CD4-positive, alpha-beta memory T cell (primary cell): ENCODE measurements at regions of chr10 and their contacts with region 1.

Region 1: GRCh38 chr10:124719213-124719851 is 24.8 kb downstream of the FAM53B start:
- DNase-seq: peak; percentile 81 to 89 (median 84)
- H3K4me3 ChIP-seq: peak overlapping the region in 1 of 2 donors; percentile 19
- H3K4me3 Mint-ChIP-seq: peak overlapping the region; percentile 59 to 83 (median 72)
- H3K27ac ChIP-seq: peak overlapping the region; percentile 81
- H3K27ac Mint-ChIP-seq: peak overlapping the region; percentile 87 to 98 (median 96)
- H3K4me1 ChIP-seq: peaks cover 100% of the 10 kb centered on the region
- H3K4me1 Mint-ChIP-seq: peaks cover 79 to 97% (median 89%) of the 10 kb centered on the region in 4 donors
- H3K27me3 ChIP-seq: no peaks in the 10 kb centered on the region
- H3K27me3 Mint-ChIP-seq: no peaks in the 10 kb centered on the region

Region 2: DNA sequence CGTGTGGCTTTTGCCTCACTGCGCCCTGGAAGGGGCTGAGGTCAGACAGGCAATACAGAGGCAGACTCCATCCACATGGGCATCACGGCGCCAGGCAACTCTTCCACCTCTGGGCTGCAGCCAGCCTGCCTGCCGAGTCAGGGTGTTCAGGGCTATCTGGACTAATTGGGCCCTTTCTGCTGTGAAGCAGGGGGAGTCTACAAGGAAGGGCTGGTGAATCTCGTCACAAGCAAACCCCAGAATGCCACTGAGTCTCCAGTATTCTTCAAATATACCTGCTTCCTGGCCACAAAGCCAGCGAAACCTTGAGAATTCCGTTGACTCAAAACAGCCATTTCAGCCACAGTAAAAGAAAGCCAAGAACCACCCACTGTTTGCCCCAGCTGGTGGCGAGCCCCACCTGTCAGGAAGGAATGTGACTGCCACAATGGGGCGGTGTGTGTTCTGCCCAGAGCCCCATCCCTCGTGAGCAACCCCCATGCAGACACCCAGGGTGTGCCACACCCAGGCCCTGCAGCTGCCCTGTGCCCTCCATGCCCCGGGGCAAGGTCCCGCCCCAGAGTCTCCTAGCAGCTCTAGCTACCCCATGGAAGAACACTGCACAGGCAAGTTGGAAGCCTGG is 92.5 kb before region 1 on chr10:
- CTCF ChIA-PET with region 1: interaction called, 50 read pairs
- POLR2A ChIA-PET with region 1: interaction called, 27 read pairs
- intact Hi-C with region 1: loop called (anchors 1 kb)
- DNase-seq: peak; percentile 46 to 60 (median 55)
- H3K4me3 ChIP-seq: peak overlapping the region; percentile 11 to 14
- H3K4me3 Mint-ChIP-seq: peak overlapping the region in 7 of 8 donors; percentile 36 to 76 (median 69)
- H3K27ac ChIP-seq: peak overlapping the region; percentile 49
- H3K27ac Mint-ChIP-seq: peak overlapping the region; percentile 82 to 96 (median 89)
- H3K4me1 ChIP-seq: peaks cover 68% of the 10 kb centered on the region
- H3K4me1 Mint-ChIP-seq: peaks cover 34 to 81% (median 50%) of the 10 kb centered on the region in 4 donors
- H3K27me3 ChIP-seq: no peaks in the 10 kb centered on the region
- H3K27me3 Mint-ChIP-seq: no peaks in the 10 kb centered on the region

Region 3: DNA sequence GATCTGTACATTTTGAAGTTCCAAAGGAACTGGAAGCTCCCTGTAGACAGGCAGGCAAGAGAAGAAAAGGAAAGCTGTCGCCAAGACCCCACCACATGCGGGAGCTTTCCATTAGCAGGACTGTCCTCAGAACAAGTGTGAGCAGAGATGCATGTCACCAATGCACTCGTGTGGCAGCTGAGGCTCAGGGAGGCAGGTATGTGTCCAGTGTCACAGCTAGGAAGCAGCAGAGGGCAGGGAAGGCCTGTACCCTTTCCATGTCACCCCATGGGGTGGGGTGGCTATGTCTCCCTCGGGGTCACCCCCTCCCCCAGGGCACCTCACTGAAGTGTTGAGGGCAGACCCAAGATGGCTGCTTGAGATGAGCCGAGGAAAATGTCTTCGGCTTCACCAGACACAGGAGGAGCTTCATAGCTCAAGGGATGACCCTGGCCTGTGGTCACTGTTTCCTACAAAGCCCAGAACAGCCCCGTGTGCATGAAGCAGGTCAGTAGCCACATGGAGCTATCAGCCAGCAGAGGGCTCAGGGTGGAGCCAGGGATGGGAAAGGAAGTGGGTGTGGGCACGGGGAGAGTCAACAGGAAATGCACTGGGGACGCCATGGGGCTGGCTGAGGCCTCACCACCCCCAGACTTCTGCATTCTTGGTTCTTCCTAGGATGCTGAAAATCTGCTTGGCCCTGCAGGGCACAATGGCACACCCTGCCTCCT is 71.8 kb before region 1 on chr10:
- CTCF ChIA-PET with region 1: interaction called, 200 read pairs
- POLR2A ChIA-PET with region 1: interaction called, 297 read pairs
- intact Hi-C with region 1: loop called (anchors 1 kb)
- DNase-seq: peak; percentile 75 to 85 (median 78)
- H3K4me3 ChIP-seq: peak overlapping the region; percentile 26 to 34
- H3K4me3 Mint-ChIP-seq: peak overlapping the region; percentile 41 to 88 (median 80)
- H3K27ac ChIP-seq: peak overlapping the region; percentile 79
- H3K27ac Mint-ChIP-seq: peak overlapping the region; percentile 92 to 99 (median 96)
- H3K4me1 ChIP-seq: peaks cover 95% of the 10 kb centered on the region
- H3K4me1 Mint-ChIP-seq: peaks cover 69 to 100% (median 90%) of the 10 kb centered on the region in 4 donors
- H3K27me3 ChIP-seq: no peaks in the 10 kb centered on the region
- H3K27me3 Mint-ChIP-seq: no peaks in the 10 kb centered on the region

Region 4: DNA sequence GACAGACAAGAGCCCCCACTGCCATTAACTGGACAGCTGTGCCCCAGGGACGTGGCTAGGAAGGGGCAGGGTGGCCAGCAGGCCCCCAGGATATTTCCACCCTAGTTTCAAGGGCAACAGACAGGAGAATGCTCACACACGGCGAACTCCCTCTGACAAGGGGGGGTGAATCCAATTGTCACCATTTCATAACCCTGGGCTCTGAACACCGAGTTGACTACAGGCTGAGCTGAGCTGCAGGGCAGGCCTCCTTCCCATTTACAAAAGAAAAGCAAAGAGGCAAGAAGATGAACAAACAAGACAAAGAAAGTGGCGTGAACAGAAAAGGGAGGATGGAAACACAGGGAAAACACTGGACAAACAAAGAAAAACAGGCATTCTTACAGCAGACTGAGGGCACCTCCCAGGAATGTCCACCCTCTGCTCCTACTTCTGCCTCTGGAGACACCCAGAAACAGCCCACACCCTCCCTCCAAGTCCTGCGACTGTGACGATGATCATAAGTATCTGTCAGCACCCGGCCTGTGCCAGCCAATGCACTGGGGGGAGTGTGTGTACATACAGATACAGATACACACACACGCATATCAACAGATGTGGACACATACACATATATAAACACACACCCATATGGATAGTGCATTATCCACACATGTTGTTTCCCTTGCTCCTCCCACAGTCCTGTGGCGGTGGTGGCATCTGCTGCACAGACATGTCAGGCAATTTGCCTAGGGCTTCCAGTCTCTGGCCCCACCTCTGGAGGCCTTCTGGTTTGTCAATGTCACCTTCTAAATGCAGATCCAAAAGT is 41.4 kb before region 1 on chr10:
- CTCF ChIA-PET with region 1: interaction called, 120 read pairs
- POLR2A ChIA-PET with region 1: interaction called, 79 read pairs
- intact Hi-C with region 1: loop called (anchors 1 kb)
- DNase-seq: no peak
- H3K4me3 ChIP-seq: peak overlapping the region; percentile 36 to 56
- H3K4me3 Mint-ChIP-seq: peak overlapping the region; percentile 76 to 88 (median 79)
- H3K27ac ChIP-seq: peak overlapping the region; percentile 54
- H3K27ac Mint-ChIP-seq: peak overlapping the region; percentile 85 to 97 (median 92)
- H3K4me1 ChIP-seq: peaks cover 96% of the 10 kb centered on the region
- H3K4me1 Mint-ChIP-seq: peaks cover 70 to 99% (median 89%) of the 10 kb centered on the region in 4 donors
- H3K27me3 ChIP-seq: no peaks in the 10 kb centered on the region
- H3K27me3 Mint-ChIP-seq: no peaks in the 10 kb centered on the region

Region 5: DNA sequence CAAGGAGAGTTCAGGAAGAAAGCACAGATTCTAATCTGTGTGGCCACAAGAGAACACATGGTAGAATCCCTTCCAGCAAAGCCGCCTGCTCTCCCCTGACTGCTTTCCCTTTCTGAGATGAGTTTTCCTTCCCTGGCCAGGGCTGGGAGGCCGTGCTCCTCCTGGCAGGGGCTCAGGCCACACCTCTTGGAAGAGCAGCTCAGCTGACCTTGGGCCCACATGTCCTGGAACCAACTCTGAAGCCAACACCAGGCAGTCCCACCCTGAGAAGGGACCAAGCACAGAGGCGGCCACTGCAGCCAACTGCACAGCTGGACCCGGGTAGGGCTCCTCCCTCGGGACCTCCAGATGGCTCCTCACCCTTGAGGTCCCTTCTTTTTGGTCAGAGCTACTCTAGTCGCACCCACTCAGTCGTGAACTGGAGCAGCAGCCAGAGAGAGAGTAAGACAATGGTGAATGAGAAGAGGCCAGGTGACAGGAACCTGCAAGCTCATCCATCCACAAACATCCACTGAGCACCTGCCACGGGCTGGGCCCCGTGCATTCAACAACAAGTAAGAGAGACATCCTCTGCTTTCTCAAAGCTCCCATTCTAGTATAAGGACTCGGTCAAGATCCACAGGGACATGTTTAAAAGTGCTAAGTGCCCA is 15.4 kb before region 1 on chr10:
- CTCF ChIA-PET with region 1: interaction called, 201 read pairs
- POLR2A ChIA-PET with region 1: interaction called, 544 read pairs
- intact Hi-C with region 1: loop called (anchors 1 kb)
- DNase-seq: peak in 1 of 5 donors; percentile 15
- H3K4me3 ChIP-seq: no peak overlapping the region
- H3K4me3 Mint-ChIP-seq: peak overlapping the region in 7 of 8 donors; percentile 23 to 90 (median 58)
- H3K27ac ChIP-seq: peak overlapping the region; percentile 90
- H3K27ac Mint-ChIP-seq: peak overlapping the region; percentile 95 to 99 (median 97)
- H3K4me1 ChIP-seq: peaks cover 100% of the 10 kb centered on the region
- H3K4me1 Mint-ChIP-seq: peaks cover 72 to 100% (median 93%) of the 10 kb centered on the region in 4 donors
- H3K27me3 ChIP-seq: no peaks in the 10 kb centered on the region
- H3K27me3 Mint-ChIP-seq: no peaks in the 10 kb centered on the region

Region 6: DNA sequence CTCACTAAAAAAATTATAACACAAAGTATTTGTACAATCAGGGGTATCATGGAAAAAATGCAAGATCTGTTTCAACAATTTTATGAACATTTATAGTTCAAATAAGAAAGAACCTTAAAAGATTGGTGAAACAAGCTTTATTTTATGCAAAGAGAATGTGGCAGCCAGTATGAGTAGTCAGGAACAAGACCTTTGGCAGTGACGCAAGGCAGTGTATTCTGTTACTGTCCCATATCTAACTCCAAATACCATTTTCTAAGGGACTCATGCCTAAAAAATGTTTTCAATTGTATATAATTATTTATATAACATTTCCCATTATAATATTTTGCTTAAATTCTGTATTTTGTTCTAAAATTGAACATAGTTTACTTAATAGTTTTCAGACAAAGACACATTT is 43.9 kb after region 1 on chr10:
- CTCF ChIA-PET with region 1: no interaction called
- POLR2A ChIA-PET with region 1: no interaction called
- intact Hi-C with region 1: no loop called
- DNase-seq: no peak
- H3K4me3 ChIP-seq: no peak overlapping the region
- H3K4me3 Mint-ChIP-seq: no peak overlapping the region
- H3K27ac ChIP-seq: no peak overlapping the region
- H3K27ac Mint-ChIP-seq: no peak overlapping the region
- H3K4me1 ChIP-seq: no peaks in the 10 kb centered on the region
- H3K4me1 Mint-ChIP-seq: peaks cover 0 to 3% (median 0%) of the 10 kb centered on the region in 4 donors
- H3K27me3 ChIP-seq: no peaks in the 10 kb centered on the region
- H3K27me3 Mint-ChIP-seq: no peaks in the 10 kb centered on the region

Region 7: DNA sequence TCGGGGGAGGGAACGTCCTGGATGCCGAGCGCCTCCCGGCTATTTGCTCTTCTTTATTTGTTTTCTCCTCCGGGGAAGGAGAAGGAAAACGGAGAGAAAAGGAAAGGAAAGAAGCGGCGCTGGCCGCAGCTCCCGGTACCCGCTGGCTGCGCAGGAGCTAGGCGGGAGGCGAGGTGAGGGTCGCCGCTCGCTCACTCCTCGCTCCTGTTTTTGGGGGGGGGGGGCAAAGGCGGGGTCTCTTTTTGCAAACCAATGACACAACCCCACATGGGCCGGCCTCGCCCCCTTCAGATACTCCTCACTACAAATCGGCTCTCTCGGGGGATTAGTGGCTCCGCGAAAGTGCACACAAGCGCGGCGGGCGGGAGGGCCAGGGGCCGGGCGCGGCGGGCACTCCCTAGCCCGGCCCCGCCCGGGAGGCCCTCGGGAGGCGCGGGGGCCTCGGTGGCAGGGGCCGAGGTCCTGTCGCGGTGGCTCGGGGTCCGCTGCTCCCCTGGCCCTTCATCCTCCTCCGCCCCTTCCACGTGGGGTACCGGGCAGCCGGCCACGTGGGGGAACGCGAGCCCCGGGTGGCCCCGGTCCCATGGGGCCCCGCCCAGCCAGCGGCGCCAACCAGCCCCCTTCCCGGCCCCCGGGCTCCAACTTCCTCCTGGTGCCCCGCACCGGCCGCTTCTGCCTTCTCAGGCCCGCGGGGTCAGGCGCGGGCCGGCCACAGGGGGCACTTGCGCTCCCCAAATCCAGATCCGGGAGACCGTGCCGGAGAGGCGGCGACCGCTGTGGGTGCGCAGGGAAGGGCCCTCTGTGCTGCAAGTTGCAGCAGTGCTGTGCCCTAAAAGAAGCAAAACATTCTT is 441.7 kb after region 1 on chr10:
- CTCF ChIA-PET with region 1: no interaction called
- POLR2A ChIA-PET with region 1: no interaction called
- intact Hi-C with region 1: no loop called
- DNase-seq: no peak
- H3K4me3 ChIP-seq: no peak overlapping the region
- H3K4me3 Mint-ChIP-seq: peak overlapping the region in 7 of 8 donors; percentile 21 to 63 (median 46)
- H3K27ac ChIP-seq: no peak overlapping the region
- H3K27ac Mint-ChIP-seq: no peak overlapping the region
- H3K4me1 ChIP-seq: no peaks in the 10 kb centered on the region
- H3K4me1 Mint-ChIP-seq: peaks cover 4 to 8% (median 5%) of the 10 kb centered on the region in 4 donors
- H3K27me3 ChIP-seq: peaks cover 11% of the 10 kb centered on the region
- H3K27me3 Mint-ChIP-seq: peaks cover 24 to 27% of the 10 kb centered on the region in 2 donors

Region 8: DNA sequence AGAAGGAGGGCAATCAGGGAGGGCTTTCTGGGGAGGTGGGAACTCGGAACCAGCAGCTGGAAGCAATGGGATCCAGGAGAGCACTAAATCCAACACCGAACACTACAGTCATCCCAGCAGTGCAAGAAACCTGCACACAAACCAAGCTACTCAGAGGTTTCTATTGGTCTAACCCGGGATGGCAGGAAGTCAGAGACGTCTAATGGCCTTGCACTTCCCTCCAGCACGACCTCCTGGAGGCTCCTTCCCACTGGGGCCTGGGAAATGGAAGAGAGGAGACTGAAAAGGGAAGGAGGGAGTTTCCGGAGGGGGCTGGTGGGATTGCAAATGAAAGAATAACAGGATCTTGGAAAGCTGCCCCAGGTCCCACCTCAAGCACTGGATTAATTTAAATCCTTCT is 907.3 kb after region 1 on chr10:
- CTCF ChIA-PET with region 1: no interaction called
- POLR2A ChIA-PET with region 1: no interaction called
- intact Hi-C with region 1: no loop called
- DNase-seq: no peak
- H3K4me3 ChIP-seq: no peak overlapping the region
- H3K4me3 Mint-ChIP-seq: no peak overlapping the region
- H3K27ac ChIP-seq: no peak overlapping the region
- H3K27ac Mint-ChIP-seq: no peak overlapping the region
- H3K4me1 ChIP-seq: no peaks in the 10 kb centered on the region
- H3K4me1 Mint-ChIP-seq: no peaks in the 10 kb centered on the region
- H3K27me3 ChIP-seq: no peaks in the 10 kb centered on the region
- H3K27me3 Mint-ChIP-seq: peaks cover 1 to 3% of the 10 kb centered on the region in 2 donors